ENCODE measurements at regions of chr3 and their contacts with region 1.

Region 1: DNA sequence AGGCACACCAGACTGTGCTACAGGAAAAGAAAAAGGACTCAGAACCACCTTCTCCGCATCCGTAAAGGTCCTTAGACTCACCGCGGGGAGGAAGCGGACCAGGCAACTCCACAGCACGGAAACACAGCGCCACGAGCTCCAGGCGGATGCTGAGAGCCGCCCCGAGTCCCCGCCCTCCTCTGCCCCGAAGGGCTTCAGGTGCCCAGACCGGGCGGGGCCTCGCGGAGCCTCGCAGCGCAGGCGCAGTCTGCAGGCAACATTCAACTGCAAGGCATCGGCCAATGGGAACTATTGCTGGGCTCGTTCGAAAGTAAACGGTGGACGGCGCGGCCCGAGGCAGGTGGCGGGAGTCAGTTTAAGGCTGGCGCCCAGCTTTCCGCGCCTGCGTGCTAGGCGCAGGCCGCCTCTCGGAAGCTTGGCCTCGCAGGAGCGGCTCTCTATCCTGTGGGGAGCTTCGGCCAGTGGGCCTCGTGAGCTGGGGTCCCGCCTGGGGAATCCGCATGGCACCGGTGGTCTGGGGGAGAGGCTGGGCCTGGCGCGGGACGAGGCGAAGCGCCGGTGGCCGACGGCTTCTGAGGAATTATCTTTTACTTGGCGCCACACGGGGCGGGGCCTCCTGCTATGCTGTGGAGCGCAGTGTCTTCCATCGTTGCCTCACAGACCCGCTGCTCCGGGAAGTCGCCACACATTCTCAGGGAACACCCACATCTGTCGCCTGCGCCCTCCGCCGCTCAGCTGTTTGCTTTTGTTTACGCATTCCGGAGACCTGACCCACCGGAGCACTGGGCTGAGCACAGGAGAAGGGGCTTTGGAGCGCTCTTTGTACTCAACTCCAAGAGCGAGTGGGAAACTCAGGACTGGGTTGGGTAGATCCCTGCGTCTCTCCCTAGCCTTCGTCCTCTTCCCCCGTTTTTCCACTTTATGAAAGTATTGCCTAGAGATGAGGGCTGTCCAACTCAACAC is at the start of gene TRIM59:
- DNase-seq: peak; percentile 63
- ATAC-seq: peak; percentile 94
- H3K4me3 ChIP-seq: peak within 1 kb of the TSS; percentile 54 to 78 (median 71)
- H3K27ac ChIP-seq: peak within 1 kb of the TSS; percentile 50
- H3K4me1 ChIP-seq: 0 out of 2 replicates have a peak, but pooled peaks cover 11% of the 10 kb centered on the region
- H3K27me3 ChIP-seq: no peaks in the 10 kb centered on the region; a peak in 2 of 5 replicates
- CTCF ChIP-seq: peak; percentile 15; the same call in 1 of the 2 replicates
- EP300 ChIP-seq: no peak
- POLR2A ChIP-seq: peak; percentile 64 to 69
- RAD21 ChIP-seq: no peak
- total RNA-seq, gene TRIM59: 3.2 and 4.1 TPM in 2 replicates

Region 2: GRCh38 chr3:160200353-160200752 is 249.6 kb before region 1 on chr3:
- CTCF ChIA-PET with region 1: no interaction called
- POLR2A ChIA-PET with region 1: no interaction called
- in situ Hi-C with region 1: no loop called
- intact Hi-C with region 1: no loop called
- DNase-seq: no peak
- ATAC-seq: no peak
- H3K4me3 ChIP-seq: no peak overlapping the region
- H3K27ac ChIP-seq: no peak overlapping the region
- H3K4me1 ChIP-seq: no peaks in the 10 kb centered on the region
- H3K27me3 ChIP-seq: peaks cover 0 to 2% of the 10 kb centered on the region in 2 experiments; a peak in 2 of 5 replicates
- CTCF ChIP-seq: no peak
- EP300 ChIP-seq: no peak
- POLR2A ChIP-seq: no peak
- RAD21 ChIP-seq: no peak

Region 3: GRCh38 chr3:160399125-160400029 is 50.5 kb before region 1 on chr3 and contains the starts of genes IFT80 and SMC4:
- CTCF ChIA-PET with region 1: no interaction called
- POLR2A ChIA-PET with region 1: no interaction called
- in situ Hi-C with region 1: no loop called
- intact Hi-C with region 1: loop called (anchors 2 kb)
- DNase-seq: peak; percentile 92
- ATAC-seq: peak; percentile 92
- H3K4me3 ChIP-seq: peak within 1 kb of the TSS; percentile 87 to 94 (median 94)
- H3K27ac ChIP-seq: peak within 1 kb of the TSS; percentile 98
- H3K4me1 ChIP-seq: peaks cover 27% of the 10 kb centered on the region
- H3K27me3 ChIP-seq: no peaks in the 10 kb centered on the region; a peak in 1 of 5 replicates
- CTCF ChIP-seq: no peak
- EP300 ChIP-seq: 0 out of 4 replicates have a peak, but pooled peaks of 1 of the 2 experiments have one; percentile 21
- POLR2A ChIP-seq: peak; percentile 80 to 92
- RAD21 ChIP-seq: no peak
- total RNA-seq, gene IFT80: 15.7 and 21.4 TPM in 2 replicates
- total RNA-seq, gene SMC4: 74.3 and 95.5 TPM in 2 replicates

Region 4: GRCh38 chr3:160472344-160472743 is 22.4 kb after region 1 on chr3:
- CTCF ChIA-PET with region 1: no interaction called
- POLR2A ChIA-PET with region 1: no interaction called
- in situ Hi-C with region 1: no loop called
- intact Hi-C with region 1: no loop called
- DNase-seq: no peak
- ATAC-seq: no peak
- H3K4me3 ChIP-seq: no peak overlapping the region
- H3K27ac ChIP-seq: no peak overlapping the region
- H3K4me1 ChIP-seq: no peaks in the 10 kb centered on the region
- H3K27me3 ChIP-seq: no peaks in the 10 kb centered on the region
- CTCF ChIP-seq: no peak
- EP300 ChIP-seq: no peak
- POLR2A ChIP-seq: no peak
- RAD21 ChIP-seq: no peak

Region 5: GRCh38 chr3:160999276-160999675 is 549.4 kb after region 1 on chr3:
- CTCF ChIA-PET with region 1: no interaction called
- POLR2A ChIA-PET with region 1: no interaction called
- in situ Hi-C with region 1: no loop called
- intact Hi-C with region 1: no loop called
- DNase-seq: no peak
- ATAC-seq: no peak
- H3K4me3 ChIP-seq: no peak overlapping the region
- H3K27ac ChIP-seq: no peak overlapping the region
- H3K4me1 ChIP-seq: no peaks in the 10 kb centered on the region
- H3K27me3 ChIP-seq: no peaks in the 10 kb centered on the region
- CTCF ChIP-seq: no peak
- EP300 ChIP-seq: no peak
- POLR2A ChIP-seq: no peak
- RAD21 ChIP-seq: no peak